ENCODE measurements at regions of chr1 and their contacts with region 1.

Region 1: GRCh38 chr1:225772323-225772768 is 5.3 kb upstream of the SRP9 start:
- DNase-seq: peak; percentile 51
- ATAC-seq: peak; percentile 60
- H3K4me3 ChIP-seq: no peak overlapping the region
- H3K4me3 Mint-ChIP-seq: no peak overlapping the region
- H3K27ac ChIP-seq: no peak overlapping the region
- H3K27ac Mint-ChIP-seq: no peak overlapping the region
- H3K4me1 ChIP-seq: peaks cover 9 to 10% of the 10 kb centered on the region in 2 donors
- H3K4me1 Mint-ChIP-seq: peaks cover 3% of the 10 kb centered on the region
- H3K27me3 ChIP-seq: no peaks in the 10 kb centered on the region
- H3K27me3 Mint-ChIP-seq: no peaks in the 10 kb centered on the region
- CTCF ChIP-seq: no peak

Region 2: GRCh38 chr1:224784265-224785042 is 987.9 kb before region 1 on chr1:
- CTCF ChIA-PET with region 1: no interaction called
- POLR2A ChIA-PET with region 1: no interaction called
- intact Hi-C with region 1: no loop called
- DNase-seq: no peak
- ATAC-seq: no peak
- H3K4me3 ChIP-seq: no peak overlapping the region
- H3K4me3 Mint-ChIP-seq: no peak overlapping the region
- H3K27ac ChIP-seq: no peak overlapping the region
- H3K27ac Mint-ChIP-seq: no peak overlapping the region
- H3K4me1 ChIP-seq: peaks cover 8 to 10% of the 10 kb centered on the region in 2 donors
- H3K4me1 Mint-ChIP-seq: peaks cover 20% of the 10 kb centered on the region
- H3K27me3 ChIP-seq: no peaks in the 10 kb centered on the region
- H3K27me3 Mint-ChIP-seq: no peaks in the 10 kb centered on the region
- CTCF ChIP-seq: no peak

Region 3: GRCh38 chr1:225554216-225554812 is 218.0 kb before region 1 on chr1:
- CTCF ChIA-PET with region 1: interaction called, 5 read pairs
- POLR2A ChIA-PET with region 1: no interaction called
- intact Hi-C with region 1: loop called (anchors 2 kb)
- DNase-seq: peak; percentile 39
- ATAC-seq: no peak
- H3K4me3 ChIP-seq: no peak overlapping the region
- H3K4me3 Mint-ChIP-seq: no peak overlapping the region
- H3K27ac ChIP-seq: no peak overlapping the region
- H3K27ac Mint-ChIP-seq: no peak overlapping the region
- H3K4me1 ChIP-seq: no peaks in the 10 kb centered on the region
- H3K4me1 Mint-ChIP-seq: no peaks in the 10 kb centered on the region
- H3K27me3 ChIP-seq: no peaks in the 10 kb centered on the region
- H3K27me3 Mint-ChIP-seq: peaks cover 3% of the 10 kb centered on the region
- CTCF ChIP-seq: peak; percentile 78

Region 4: DNA sequence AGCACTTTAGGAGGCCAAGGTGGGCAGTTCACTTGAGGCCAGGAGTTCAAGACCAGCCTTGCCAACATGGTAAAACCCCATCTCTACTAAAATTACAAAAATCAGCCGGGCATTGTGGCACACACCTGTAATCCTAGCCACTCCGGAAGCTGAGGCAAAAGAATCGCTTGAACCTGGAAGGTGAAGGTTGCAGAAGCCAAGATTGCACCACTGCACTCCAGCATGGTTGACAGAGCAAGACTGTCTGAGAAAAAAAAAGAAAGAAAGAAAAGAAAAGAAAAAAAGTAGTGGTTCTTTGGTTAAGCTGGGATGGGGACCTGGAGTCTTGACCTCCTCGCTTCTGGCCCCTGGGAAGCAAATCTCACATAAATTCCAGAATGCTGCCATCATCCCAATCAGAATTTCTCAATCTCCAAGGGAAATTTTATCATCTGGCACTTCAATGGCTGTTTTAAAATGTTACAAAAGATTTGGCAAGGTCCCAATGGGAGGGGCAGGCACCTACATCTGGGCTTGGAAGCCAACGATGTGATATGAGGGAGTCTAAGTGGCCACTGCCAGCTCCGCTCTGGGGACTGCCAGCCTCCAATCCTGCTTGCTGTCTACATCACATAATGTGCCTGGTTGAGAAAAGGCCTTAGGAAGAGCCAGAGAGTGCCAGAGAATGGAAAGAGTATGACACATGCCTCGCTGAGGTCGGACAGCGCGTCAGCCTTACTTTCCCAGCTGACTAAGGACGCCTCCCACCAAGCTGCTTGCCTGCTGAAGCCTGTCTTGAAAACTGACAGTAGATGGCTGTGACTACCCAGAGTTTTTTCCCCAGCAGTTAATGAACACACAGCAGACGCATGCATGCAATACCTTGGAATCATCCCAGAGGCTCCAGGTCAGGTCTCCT is 36.8 kb before region 1 on chr1:
- CTCF ChIA-PET with region 1: no interaction called
- POLR2A ChIA-PET with region 1: no interaction called
- intact Hi-C with region 1: no loop called
- DNase-seq: no peak
- ATAC-seq: no peak
- H3K4me3 ChIP-seq: no peak overlapping the region
- H3K4me3 Mint-ChIP-seq: no peak overlapping the region
- H3K27ac ChIP-seq: no peak overlapping the region
- H3K27ac Mint-ChIP-seq: no peak overlapping the region
- H3K4me1 ChIP-seq: no peaks in the 10 kb centered on the region
- H3K4me1 Mint-ChIP-seq: no peaks in the 10 kb centered on the region
- H3K27me3 ChIP-seq: no peaks in the 10 kb centered on the region
- H3K27me3 Mint-ChIP-seq: peaks cover 3% of the 10 kb centered on the region
- CTCF ChIP-seq: no peak

Measured in B cell (primary cell).